Activated CD8-positive, alpha-beta T cell treated with anti-CD3 and anti-CD28 coated beads, Interleukin-2, amount 10 ng/mL, durations not matched to agents 7 days and 5 days (primary cell): ENCODE measurements at regions of chr20 and their contacts with region 1.

Region 1: GRCh38 chr20:63223221-63224207 is 7.6 kb upstream of the YTHDF1 start:
- DNase-seq: peak; percentile 67
- ATAC-seq: peak; percentile 75
- H3K4me3 Mint-ChIP-seq: no peak overlapping the region
- H3K27ac Mint-ChIP-seq: no peak overlapping the region
- H3K4me1 Mint-ChIP-seq: no peaks in the 10 kb centered on the region
- H3K27me3 Mint-ChIP-seq: peaks cover 4% of the 10 kb centered on the region

Region 2: GRCh38 chr20:62977613-62978560 is 245.6 kb before region 1 on chr20:
- CTCF ChIA-PET with region 1: no interaction called
- POLR2A ChIA-PET with region 1: no interaction called
- DNase-seq: peak; percentile 71
- ATAC-seq: peak; percentile 57
- H3K4me3 Mint-ChIP-seq: peak overlapping the region; percentile 12
- H3K27ac Mint-ChIP-seq: peak overlapping the region; percentile 46
- H3K4me1 Mint-ChIP-seq: peaks cover 47% of the 10 kb centered on the region
- H3K27me3 Mint-ChIP-seq: peaks cover 56% of the 10 kb centered on the region

Region 3: GRCh38 chr20:63178889-63179686 is 44.4 kb before region 1 on chr20:
- CTCF ChIA-PET with region 1: no interaction called
- POLR2A ChIA-PET with region 1: no interaction called
- DNase-seq: peak; percentile 72
- ATAC-seq: peak; percentile 50
- H3K4me3 Mint-ChIP-seq: no peak overlapping the region
- H3K27ac Mint-ChIP-seq: no peak overlapping the region
- H3K4me1 Mint-ChIP-seq: peaks cover 10% of the 10 kb centered on the region
- H3K27me3 Mint-ChIP-seq: peaks cover 29% of the 10 kb centered on the region

Region 4: GRCh38 chr20:63196768-63197470 is 26.6 kb before region 1 on chr20:
- CTCF ChIA-PET with region 1: interaction called, 10 read pairs
- POLR2A ChIA-PET with region 1: no interaction called
- DNase-seq: no peak
- ATAC-seq: no peak
- H3K4me3 Mint-ChIP-seq: no peak overlapping the region
- H3K27ac Mint-ChIP-seq: peak overlapping the region; percentile 34
- H3K4me1 Mint-ChIP-seq: peaks cover 8% of the 10 kb centered on the region
- H3K27me3 Mint-ChIP-seq: no peaks in the 10 kb centered on the region

Region 5: DNA sequence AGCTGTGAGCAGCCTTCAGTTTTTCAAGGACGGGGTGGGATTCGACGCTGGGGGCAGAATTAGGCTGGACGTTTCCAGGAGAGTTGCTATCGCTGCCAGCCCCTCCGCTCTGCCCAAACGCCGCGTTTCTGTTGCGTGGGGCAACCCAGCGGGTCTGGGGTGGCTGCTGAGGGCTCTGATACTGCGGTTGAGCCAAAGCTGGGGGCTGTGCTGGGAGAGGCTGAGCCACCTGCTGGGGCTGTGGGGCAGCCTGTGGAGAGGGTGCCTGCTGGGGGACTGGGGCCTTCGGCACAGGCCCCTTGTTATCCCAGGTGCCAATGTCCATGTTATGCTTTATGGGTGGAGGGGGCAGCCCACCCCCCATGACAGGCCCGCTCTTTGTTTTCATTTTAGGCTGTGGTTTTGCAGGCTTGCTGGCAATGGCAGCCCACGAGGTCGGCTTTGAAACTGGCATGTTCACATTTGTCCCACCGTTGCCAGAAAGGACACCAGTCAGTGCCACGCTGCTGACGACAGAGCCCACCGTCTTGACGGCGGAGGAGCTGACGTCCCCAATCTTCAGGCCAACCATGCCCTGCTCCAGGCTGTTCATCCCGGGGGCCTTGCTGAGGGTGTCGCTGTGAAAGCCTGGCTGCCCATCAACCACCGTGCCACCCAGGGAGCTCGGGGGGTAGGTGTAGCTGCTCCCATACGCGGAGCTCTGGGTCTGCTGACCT is 20.5 kb before region 1 on chr20:
- CTCF ChIA-PET with region 1: interaction called, 10 read pairs
- POLR2A ChIA-PET with region 1: no interaction called
- DNase-seq: no peak
- ATAC-seq: no peak
- H3K4me3 Mint-ChIP-seq: no peak overlapping the region
- H3K27ac Mint-ChIP-seq: no peak overlapping the region
- H3K4me1 Mint-ChIP-seq: peaks cover 4% of the 10 kb centered on the region
- H3K27me3 Mint-ChIP-seq: no peaks in the 10 kb centered on the region

Region 6: DNA sequence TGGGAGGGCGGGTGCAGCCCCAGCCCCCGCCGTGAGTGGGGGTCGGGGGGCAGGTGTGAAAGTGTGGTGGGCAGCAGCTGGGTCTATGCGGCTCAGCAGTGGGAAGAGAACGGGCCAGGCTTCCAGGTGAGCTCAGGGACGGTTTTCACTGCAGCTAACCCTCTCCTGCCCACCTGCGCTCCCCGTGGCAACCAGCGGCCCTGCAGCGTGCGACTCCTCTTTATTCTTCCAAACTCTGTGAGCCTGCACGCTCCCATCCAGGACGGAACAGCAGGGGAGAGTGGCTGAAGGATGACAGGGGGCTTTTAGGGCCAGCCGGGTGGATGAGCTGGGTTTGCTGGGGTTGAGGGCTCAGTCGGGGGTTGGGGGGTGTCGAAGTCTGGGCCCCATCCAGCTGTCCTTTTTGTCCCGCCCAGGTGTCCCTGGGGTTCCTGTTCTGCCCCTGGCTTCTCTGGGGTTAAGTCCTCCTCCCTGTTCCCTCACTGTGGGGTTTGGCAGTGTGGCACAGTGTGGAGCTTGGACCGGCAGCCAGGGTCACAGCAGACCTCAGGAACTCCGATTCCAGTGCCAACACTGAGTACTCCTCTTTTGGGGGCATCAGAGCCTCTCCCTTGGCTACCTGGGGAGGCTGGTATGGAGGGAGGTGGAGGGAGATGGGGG is 11.4 kb after region 1 on chr20:
- CTCF ChIA-PET with region 1: interaction called, 61 read pairs
- POLR2A ChIA-PET with region 1: no interaction called
- DNase-seq: peak; percentile 43
- ATAC-seq: peak; percentile 56
- H3K4me3 Mint-ChIP-seq: no peak overlapping the region
- H3K27ac Mint-ChIP-seq: no peak overlapping the region
- H3K4me1 Mint-ChIP-seq: peaks cover 5% of the 10 kb centered on the region
- H3K27me3 Mint-ChIP-seq: peaks cover 24% of the 10 kb centered on the region

Region 7: GRCh38 chr20:63280929-63281545 is 57.5 kb after region 1 on chr20:
- CTCF ChIA-PET with region 1: interaction called, 14 read pairs
- POLR2A ChIA-PET with region 1: no interaction called
- DNase-seq: no peak
- ATAC-seq: no peak
- H3K4me3 Mint-ChIP-seq: no peak overlapping the region
- H3K27ac Mint-ChIP-seq: no peak overlapping the region
- H3K4me1 Mint-ChIP-seq: peaks cover 4% of the 10 kb centered on the region
- H3K27me3 Mint-ChIP-seq: no peaks in the 10 kb centered on the region

Region 8: GRCh38 chr20:63290677-63291472 is 67.4 kb after region 1 on chr20:
- CTCF ChIA-PET with region 1: interaction called, 19 read pairs
- POLR2A ChIA-PET with region 1: no interaction called
- DNase-seq: peak; percentile 66
- ATAC-seq: peak; percentile 68
- H3K4me3 Mint-ChIP-seq: no peak overlapping the region
- H3K27ac Mint-ChIP-seq: no peak overlapping the region
- H3K4me1 Mint-ChIP-seq: peaks cover 8% of the 10 kb centered on the region
- H3K27me3 Mint-ChIP-seq: peaks cover 2% of the 10 kb centered on the region

Region 9: GRCh38 chr20:63381807-63382322 is 158.4 kb after region 1 on chr20:
- CTCF ChIA-PET with region 1: interaction called, 25 read pairs
- POLR2A ChIA-PET with region 1: no interaction called
- DNase-seq: peak; percentile 39
- ATAC-seq: peak; percentile 61
- H3K4me3 Mint-ChIP-seq: no peak overlapping the region
- H3K27ac Mint-ChIP-seq: no peak overlapping the region
- H3K4me1 Mint-ChIP-seq: no peaks in the 10 kb centered on the region
- H3K27me3 Mint-ChIP-seq: peaks cover 4% of the 10 kb centered on the region